ENCODE measurements at regions of chr2 and their contacts with region 1.

Region 1: DNA sequence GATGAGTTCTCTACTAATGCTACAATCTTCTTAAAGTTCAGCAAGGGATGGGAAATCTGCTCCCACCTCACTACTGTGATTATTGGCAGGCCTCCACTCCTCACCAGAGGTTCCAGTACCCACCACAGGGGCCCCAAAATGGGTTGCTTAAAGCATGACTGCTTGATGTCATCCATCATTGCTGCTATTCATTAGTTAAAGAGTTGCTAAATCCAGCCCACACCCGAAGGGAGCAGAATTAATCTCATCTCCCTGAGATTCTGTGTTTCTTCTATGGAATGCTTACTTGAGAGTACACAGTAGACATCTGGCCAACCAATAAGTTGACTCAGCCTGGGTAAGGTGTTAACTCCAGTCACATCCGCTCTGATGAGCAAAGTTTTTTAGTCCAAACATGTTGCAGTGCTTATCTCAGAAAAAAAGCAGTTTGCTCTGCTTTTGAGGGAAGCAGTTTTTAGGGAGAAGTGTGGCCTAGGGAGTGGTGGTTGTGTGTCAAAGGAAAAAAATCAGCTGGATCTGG is 690.2 kb upstream of the POU3F3 start:
- DNase-seq: no peak
- H3K4me3 Mint-ChIP-seq: no peak overlapping the region
- H3K27ac Mint-ChIP-seq: no peak overlapping the region
- H3K4me1 Mint-ChIP-seq: no peaks in the 10 kb centered on the region
- H3K27me3 Mint-ChIP-seq: peaks cover 90% of the 10 kb centered on the region
- CTCF ChIP-seq: no peak

Region 2: GRCh38 chr2:103959174-103960128 is 204.2 kb before region 1 on chr2:
- CTCF ChIA-PET with region 1: no interaction called
- POLR2A ChIA-PET with region 1: no interaction called
- intact Hi-C with region 1: loop called (anchors 10 kb)
- DNase-seq: peak; percentile 50
- H3K4me3 Mint-ChIP-seq: no peak overlapping the region
- H3K27ac Mint-ChIP-seq: no peak overlapping the region
- H3K4me1 Mint-ChIP-seq: no peaks in the 10 kb centered on the region
- H3K27me3 Mint-ChIP-seq: peaks cover 79% of the 10 kb centered on the region
- CTCF ChIP-seq: peak; percentile 65

Measured in MCF 10A (cell line).